ENCODE measurements at regions of chr10 and their contacts with region 1.

Region 1: DNA sequence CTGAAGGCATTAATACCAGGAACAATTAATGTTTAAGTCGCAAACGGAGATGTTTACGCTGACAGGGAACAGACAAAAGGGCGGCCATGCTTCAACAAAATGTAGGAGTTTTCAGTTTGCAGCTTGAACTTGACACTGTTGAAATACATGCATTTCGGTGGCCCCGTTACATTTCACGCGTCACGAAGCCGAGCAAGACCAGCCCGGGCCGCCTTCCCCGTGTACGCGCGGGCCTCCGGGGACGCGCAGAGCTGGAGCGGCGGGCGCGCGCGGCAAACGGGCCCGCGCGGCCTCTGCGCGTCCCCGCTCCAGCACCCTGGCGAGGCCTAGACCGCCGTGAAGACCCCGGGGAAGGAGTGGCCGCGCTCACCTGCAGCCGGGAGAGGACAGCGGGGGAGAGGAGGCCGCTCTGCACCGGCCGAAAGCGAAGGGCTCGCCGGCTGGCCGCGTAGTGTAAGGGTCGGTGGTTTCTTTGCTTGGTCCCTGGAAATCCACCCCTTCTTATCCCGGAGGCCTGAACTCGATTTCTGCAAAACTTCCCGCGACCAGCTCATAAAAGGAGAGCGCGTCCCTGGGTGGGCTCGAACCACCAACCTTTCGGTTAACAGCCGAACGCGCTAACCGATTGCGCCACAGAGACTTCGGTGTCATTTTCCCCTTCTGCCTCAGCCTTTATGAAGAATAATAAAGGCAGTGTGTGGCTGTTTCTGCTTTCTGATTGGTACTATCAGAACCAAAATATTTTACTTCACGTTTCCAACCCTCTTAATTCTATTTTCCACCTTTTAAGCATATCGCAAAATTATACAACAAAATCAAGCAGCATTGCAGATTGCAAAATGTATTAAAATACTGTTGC is 11.4 kb upstream of the EBLN1 start:
- DNase-seq: peak; percentile 75 to 91 (median 83)
- ATAC-seq: peak; percentile 77 to 84 (median 81)
- H3K4me3 ChIP-seq: peak overlapping the region; percentile 74 to 84
- H3K4me3 Mint-ChIP-seq: peak overlapping the region; percentile 82 to 87 (median 83)
- H3K27ac ChIP-seq: peak overlapping the region; percentile 83
- H3K27ac Mint-ChIP-seq: peak overlapping the region; percentile 93 to 96
- H3K4me1 ChIP-seq: peaks cover 6 to 10% of the 10 kb centered on the region in 2 experiments
- H3K4me1 Mint-ChIP-seq: peaks cover 18 to 28% (median 26%) of the 10 kb centered on the region in 3 donors
- H3K27me3 ChIP-seq: peaks cover 0 to 4% of the 10 kb centered on the region in 2 experiments
- H3K27me3 Mint-ChIP-seq: peaks cover 0 to 4% of the 10 kb centered on the region in 2 donors

Region 2: DNA sequence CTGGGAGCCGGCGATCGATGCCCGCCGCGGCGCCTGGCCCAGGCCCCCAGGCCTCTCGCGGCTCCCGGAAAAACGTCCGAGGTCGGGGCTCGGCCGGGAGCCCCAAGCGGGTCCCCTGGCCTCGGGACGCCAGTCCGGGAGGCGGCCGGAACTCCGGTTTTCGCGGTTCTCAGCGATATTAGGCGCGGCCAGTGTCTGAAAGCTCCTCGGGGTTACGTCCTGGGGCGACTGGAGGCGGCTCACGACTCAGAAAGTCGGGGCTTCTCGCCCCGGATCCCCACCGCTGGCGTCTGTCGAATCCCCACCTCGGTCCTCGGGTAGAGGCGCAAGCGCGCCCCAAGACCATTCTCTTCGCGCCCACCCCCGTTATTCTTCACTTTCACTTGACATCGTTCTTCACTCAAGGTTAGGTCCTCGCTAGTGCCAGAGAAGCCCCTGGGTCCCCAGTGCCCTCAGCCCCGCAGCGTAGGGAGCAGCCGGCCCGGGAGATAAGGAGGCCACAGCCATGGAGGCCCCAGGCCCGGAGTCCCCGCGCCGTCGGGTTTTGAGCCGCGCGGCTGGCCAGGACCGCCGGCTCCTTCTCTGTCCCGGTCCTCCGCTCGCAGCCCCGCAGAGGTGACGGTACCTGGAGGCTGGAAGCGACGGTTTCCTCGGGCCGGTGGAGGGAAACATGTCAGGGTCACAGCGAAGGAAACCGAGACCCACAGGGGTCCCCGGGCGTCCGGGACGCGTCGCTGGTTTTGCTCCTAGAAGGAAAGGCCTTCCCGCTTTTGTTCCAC is 23.8 kb after region 1 on chr10:
- CTCF ChIA-PET with region 1: interaction called in 1 of 2 experiments, 7 read pairs
- POLR2A ChIA-PET with region 1: interaction called, 3 to 14 read pairs
- DNase-seq: peak in 28 of 35 experiments; percentile 3 to 59 (median 29)
- ATAC-seq: peak; percentile 12 to 32 (median 30)
- H3K4me3 ChIP-seq: peak overlapping the region; percentile 63 to 83
- H3K4me3 Mint-ChIP-seq: peak overlapping the region; percentile 87 to 97 (median 91)
- H3K27ac ChIP-seq: peak overlapping the region; percentile 98
- H3K27ac Mint-ChIP-seq: peak overlapping the region; percentile 96 to 97
- H3K4me1 ChIP-seq: peaks cover 2 to 13% of the 10 kb centered on the region in 2 experiments
- H3K4me1 Mint-ChIP-seq: peaks cover 14 to 44% (median 36%) of the 10 kb centered on the region in 3 donors
- H3K27me3 ChIP-seq: peaks cover 0 to 18% of the 10 kb centered on the region in 2 experiments
- H3K27me3 Mint-ChIP-seq: peaks cover 7 to 10% of the 10 kb centered on the region in 2 donors

Region 3: DNA sequence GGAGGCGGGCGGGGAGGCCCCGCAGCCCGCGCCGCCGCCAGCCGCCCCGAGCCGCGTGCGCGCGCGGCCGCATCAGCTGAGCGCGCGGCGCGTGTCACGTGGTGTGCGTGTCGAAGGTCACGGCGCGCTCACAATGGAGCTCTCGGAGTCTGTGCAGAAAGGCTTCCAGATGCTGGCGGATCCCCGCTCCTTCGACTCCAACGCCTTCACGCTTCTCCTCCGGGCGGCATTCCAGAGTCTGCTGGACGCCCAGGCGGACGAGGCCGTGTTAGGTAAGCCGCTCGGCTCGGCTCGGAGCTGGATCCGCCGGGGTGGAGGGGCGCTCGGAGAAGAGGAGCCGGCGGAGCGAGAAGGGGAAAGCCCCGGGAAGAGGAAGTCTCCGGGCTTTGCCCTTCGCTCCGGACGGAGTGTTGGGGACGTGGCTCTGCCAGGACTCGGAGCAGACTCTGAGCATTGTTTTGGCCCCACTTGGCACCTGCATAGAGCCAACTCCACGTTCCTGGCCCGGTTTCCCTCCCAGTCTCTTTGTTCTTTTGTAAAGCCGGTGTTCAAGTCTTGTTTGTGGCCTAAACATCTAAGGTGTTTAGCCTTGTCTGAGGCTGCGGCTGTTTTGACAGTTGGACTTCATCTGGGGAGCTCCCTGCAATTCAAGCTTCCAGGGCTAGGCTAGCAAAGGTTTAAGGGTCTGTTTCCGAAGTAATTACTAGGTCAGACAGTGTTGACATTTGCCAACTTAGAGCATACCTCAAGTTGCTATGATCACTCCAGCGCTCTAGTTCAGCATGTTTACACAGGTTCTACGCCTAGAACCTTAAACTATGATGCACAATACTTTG is 87.3 kb after region 1 on chr10 and contains the start of gene COMMD3:
- CTCF ChIA-PET with region 1: interaction called in 1 of 2 experiments, 6 read pairs
- POLR2A ChIA-PET with region 1: interaction called, 3 to 12 read pairs
- DNase-seq: peak; percentile 59 to 92 (median 73)
- ATAC-seq: peak; percentile 70 to 74 (median 73)
- H3K4me3 ChIP-seq: peak within 1 kb of the TSS; percentile 86 to 95
- H3K4me3 Mint-ChIP-seq: peak within 1 kb of the TSS; percentile 93 to 98 (median 98)
- H3K27ac ChIP-seq: peak within 1 kb of the TSS; percentile 83
- H3K27ac Mint-ChIP-seq: peak within 1 kb of the TSS; percentile 91 to 98
- H3K4me1 ChIP-seq: peaks cover 10 to 12% of the 10 kb centered on the region in 2 experiments
- H3K4me1 Mint-ChIP-seq: peaks cover 26 to 43% (median 35%) of the 10 kb centered on the region in 3 donors
- H3K27me3 ChIP-seq: peaks cover 0 to 15% of the 10 kb centered on the region in 2 experiments
- H3K27me3 Mint-ChIP-seq: peaks cover 4 to 9% of the 10 kb centered on the region in 2 donors
- total RNA-seq, gene COMMD3: 25.2 to 57.2 (median 49.7) TPM